Posterior vena cava (tissue), 2 donors: ENCODE measurements at regions of chr5 and their contacts with region 1.

Region 1: DNA sequence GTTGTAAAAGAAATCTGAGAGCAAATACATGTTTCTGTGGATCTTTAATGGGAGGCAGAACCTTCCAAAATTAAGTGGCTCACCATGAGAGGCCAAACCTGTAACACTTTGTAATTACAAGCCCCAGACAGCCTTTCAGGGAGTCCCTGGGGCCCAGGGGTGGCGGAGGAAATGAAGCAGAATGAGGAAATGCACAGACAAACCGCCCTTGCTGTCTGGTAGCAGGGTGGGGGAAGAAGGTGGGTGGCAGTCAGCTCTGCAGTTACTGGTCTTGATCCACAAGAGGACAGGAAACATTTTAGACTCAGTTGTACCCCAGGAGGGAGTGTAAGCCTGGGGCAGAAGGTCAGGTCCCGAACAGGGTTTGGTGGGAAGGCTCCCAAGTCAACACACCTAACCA is 6.5 kb downstream of the ARL14EPL start:
- DNase-seq: no peak

Region 2: DNA sequence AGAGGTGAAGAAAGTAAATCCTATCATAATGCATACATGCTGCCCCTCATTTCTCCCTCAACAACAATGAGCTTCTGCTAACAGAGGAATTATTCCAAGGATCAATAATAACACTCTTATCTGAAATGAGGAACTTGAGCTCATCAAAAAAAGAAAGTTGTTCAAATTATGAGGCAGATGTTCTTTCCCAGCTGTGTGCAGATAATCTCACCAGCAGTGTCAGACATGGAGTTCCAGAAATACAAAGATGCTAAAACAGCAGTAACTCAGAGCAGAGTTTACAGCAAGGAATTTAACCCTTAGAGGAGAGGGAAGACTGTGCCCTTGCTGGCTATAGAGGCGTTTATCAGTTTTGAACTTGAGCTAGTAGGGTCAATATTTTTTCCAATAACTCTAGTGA is 1022.2 kb before region 1 on chr5:
- intact Hi-C with region 1: no loop called
- DNase-seq: no peak

Region 3: GRCh38 chr5:116090302-116090701 is 51.5 kb after region 1 on chr5:
- intact Hi-C with region 1: loop called in 1 of 2 experiments (anchors 2 kb)
- DNase-seq: no peak